ENCODE measurements at regions of chr3 and their contacts with region 1.

Region 1: DNA sequence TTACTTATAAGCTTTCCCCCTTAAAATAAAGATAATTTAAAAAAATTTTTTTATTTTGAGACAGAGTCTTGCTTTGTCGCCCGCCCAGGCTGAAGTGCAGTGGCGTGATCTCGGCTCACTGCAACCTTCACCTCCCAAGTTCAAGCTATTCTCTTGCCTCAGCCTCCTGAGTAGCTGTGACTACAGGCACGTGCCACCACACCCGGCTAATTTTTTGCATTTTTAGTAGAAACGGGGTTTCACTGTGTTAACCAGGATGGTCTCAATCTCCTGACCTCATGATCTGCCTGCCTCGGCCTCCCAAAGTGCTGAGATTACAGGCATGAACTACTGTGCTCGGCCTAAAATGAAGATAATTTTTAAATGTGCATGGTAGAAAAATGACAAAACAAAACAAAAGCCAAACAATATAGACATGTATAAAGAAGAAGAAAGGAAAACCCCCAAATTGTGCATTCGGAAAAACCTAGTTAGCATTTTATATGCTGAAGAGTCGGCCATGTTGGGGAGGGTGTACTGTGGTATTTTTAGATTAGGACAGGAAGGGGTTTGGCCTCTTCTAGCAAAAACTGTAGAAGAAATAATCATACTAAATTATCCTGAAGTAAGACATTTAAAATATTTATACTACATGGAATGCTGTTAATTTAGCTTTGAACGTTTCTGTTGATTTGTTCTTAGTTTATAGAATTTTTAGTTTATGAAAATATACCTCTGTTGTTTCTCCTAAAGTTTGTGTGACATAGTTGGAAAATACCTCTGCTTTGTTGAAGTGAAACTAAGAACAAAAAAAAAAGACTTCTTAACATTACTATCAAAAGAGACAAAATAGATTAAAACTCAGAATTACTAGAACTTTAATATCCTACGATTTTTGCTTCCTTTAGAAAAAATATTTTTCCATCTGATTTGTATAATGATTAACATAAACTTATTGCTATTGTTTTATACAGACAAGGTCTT is 7.4 kb downstream of the APPL1 start:
- H3K4me3 Mint-ChIP-seq: no peak overlapping the region
- H3K27ac Mint-ChIP-seq: peak overlapping the region; percentile 22
- H3K4me1 Mint-ChIP-seq: peaks cover 21% of the 10 kb centered on the region
- H3K27me3 Mint-ChIP-seq: no peaks in the 10 kb centered on the region

Region 2: GRCh38 chr3:56207922-56208321 is 1027.0 kb before region 1 on chr3:
- intact Hi-C with region 1: no loop called
- H3K4me3 Mint-ChIP-seq: no peak overlapping the region
- H3K27ac Mint-ChIP-seq: no peak overlapping the region
- H3K4me1 Mint-ChIP-seq: no peaks in the 10 kb centered on the region
- H3K27me3 Mint-ChIP-seq: peaks cover 3% of the 10 kb centered on the region

Region 3: DNA sequence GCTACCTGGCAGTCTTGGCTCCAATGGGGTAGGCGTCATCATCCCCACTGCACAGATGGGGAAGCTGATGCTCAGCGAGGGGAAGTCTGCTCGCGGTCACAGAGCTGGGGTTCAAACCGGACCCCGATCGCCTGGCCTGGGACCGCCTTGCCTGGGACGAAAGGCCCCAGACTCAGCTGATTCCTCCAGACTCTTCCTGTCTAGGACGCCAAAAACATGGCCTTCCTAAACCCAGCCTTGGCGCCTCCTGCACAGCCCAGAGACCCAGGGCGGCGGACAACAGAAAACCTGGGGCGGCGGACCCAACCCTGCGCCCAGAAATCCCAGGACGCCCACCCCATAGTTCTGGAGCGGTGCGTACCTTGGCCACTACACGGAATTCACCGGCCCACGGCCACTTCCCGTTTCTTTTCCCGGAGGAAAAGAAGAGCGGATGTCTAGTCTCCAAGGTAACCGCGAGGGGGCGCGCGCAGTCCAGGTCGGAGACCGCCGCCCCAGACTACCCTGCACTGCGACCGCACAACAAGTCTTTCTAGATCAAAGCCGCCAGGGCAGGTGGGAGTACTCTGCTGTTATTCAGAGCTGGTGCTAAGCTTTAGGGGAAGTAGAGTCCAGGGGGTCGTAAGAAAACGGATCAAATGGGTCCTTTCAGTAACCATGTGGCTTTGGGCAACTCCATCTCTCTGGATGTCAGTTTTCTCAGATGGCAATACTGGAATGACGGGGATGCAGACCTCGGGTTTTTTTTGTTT is 64.8 kb before region 1 on chr3:
- intact Hi-C with region 1: loop called (anchors 5 kb)
- H3K4me3 Mint-ChIP-seq: peak overlapping the region; percentile 59
- H3K27ac Mint-ChIP-seq: no peak overlapping the region
- H3K4me1 Mint-ChIP-seq: peaks cover 29% of the 10 kb centered on the region
- H3K27me3 Mint-ChIP-seq: peaks cover 46% of the 10 kb centered on the region

Measured in dendritic cell treated with granulocyte-macrophage colony-stimulating factor and Interleukin-4, amounts not matched to agents 40 ng/mL and 50 ng/mL, for 4 days (primary cell).